ENCODE measurements at regions of chr10 and their contacts with region 1.

Region 1: DNA sequence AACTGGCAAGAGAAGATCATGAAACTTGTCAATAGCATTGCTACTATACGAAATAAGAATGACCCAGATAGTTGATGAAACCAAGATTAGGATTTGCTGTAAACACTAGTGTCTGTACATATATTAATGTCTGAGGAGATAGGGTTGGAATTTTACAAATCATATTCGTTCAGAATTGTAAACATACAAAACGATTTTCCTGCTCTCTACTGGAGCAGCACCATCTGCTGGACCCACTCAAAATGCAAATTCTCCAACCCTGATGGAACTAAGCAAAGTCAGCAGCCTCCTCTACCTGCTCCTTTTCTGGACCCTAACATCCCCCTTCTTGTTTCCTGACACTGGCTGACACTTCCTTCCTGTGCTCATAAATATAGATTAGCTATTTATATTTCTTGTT is 29.4 kb upstream of the SGMS1 start:
- DNase-seq: peak in 4 of 5 donors; percentile 29 to 37 (median 32)
- H3K4me3 ChIP-seq: no peak overlapping the region
- H3K4me3 Mint-ChIP-seq: peak overlapping the region in 1 of 8 donors; percentile 33
- H3K27ac ChIP-seq: no peak overlapping the region
- H3K27ac Mint-ChIP-seq: peak overlapping the region in 1 of 7 donors; percentile 32
- H3K4me1 ChIP-seq: peaks cover 15% of the 10 kb centered on the region
- H3K4me1 Mint-ChIP-seq: peaks cover 15 to 22% (median 16%) of the 10 kb centered on the region in 4 donors
- H3K27me3 ChIP-seq: no peaks in the 10 kb centered on the region
- H3K27me3 Mint-ChIP-seq: no peaks in the 10 kb centered on the region

Region 2: GRCh38 chr10:50367732-50368131 is 285.4 kb before region 1 on chr10:
- CTCF ChIA-PET with region 1: interaction called, 17 read pairs
- POLR2A ChIA-PET with region 1: no interaction called
- intact Hi-C with region 1: loop called (anchors 1 kb)
- DNase-seq: peak in 1 of 5 donors; percentile 3
- H3K4me3 ChIP-seq: no peak overlapping the region
- H3K4me3 Mint-ChIP-seq: no peak overlapping the region
- H3K27ac ChIP-seq: no peak overlapping the region
- H3K27ac Mint-ChIP-seq: no peak overlapping the region
- H3K4me1 ChIP-seq: peaks cover 4% of the 10 kb centered on the region
- H3K4me1 Mint-ChIP-seq: peaks cover 11 to 20% (median 13%) of the 10 kb centered on the region in 4 donors
- H3K27me3 ChIP-seq: no peaks in the 10 kb centered on the region
- H3K27me3 Mint-ChIP-seq: no peaks in the 10 kb centered on the region

Region 3: DNA sequence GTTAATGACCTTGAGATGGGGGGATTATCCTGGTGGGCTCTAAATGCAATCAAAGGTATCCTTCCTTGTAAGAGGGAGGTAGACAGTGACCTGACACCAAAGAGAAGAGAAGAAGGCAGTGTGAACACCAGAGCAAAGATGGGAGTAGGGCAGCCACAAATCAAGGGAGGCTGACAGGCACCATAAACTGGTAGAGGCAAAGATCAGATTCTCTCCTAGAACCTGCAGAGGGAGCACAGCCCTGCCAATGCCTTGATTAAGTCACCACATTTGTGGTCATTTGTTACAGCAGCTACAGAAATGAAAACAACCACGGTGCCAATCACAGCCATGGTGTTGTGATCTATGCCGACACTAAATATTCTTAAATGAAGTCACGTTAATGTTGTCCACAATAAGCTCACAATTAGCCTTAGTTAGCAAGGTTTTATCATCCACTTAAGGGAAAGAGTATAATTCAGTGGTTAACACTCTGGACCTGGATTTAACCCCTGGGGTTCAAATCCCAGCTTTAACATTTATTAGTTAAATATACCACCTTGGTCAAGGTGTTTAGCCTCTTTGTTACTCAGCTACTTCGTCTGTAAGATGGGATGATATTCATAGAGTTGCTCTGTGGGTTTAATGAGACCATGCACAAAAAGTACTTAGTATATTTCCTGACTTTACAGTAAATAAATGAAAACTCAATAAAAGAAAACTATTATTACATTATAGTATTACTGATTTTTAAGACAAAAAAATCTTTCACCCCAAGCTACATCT is 100.2 kb before region 1 on chr10:
- CTCF ChIA-PET with region 1: interaction called, 26 read pairs
- POLR2A ChIA-PET with region 1: no interaction called
- intact Hi-C with region 1: loop called (anchors 1 kb)
- DNase-seq: peak; percentile 21 to 49 (median 32)
- H3K4me3 ChIP-seq: no peak overlapping the region
- H3K4me3 Mint-ChIP-seq: no peak overlapping the region
- H3K27ac ChIP-seq: no peak overlapping the region
- H3K27ac Mint-ChIP-seq: peak overlapping the region in 3 of 7 donors; percentile 5 to 7 (median 6)
- H3K4me1 ChIP-seq: peaks cover 8% of the 10 kb centered on the region
- H3K4me1 Mint-ChIP-seq: peaks cover 22 to 55% (median 35%) of the 10 kb centered on the region in 4 donors
- H3K27me3 ChIP-seq: no peaks in the 10 kb centered on the region
- H3K27me3 Mint-ChIP-seq: no peaks in the 10 kb centered on the region

Region 4: DNA sequence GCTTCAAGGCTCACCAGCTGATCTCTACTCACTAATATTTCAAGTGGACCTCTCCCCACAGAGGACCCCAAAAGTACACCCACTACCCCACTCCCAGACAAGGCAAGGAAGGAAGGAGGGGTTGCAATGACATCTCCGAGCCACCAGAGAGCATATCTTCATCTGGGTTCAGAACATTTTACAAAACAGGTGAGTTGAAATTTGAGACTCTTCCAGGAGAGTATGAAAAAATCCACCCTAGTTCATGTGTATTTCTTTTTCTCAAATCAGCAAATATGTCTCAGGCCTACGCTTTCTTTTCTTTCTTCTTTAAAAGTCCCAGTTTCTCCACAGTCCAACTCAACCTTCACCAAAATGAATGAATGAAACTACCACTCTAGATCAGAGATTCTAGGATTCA is 91.3 kb before region 1 on chr10:
- CTCF ChIA-PET with region 1: interaction called, 11 read pairs
- POLR2A ChIA-PET with region 1: no interaction called
- intact Hi-C with region 1: loop called (anchors 1 kb)
- DNase-seq: peak in 3 of 5 donors; percentile 15 to 25 (median 16)
- H3K4me3 ChIP-seq: no peak overlapping the region
- H3K4me3 Mint-ChIP-seq: no peak overlapping the region
- H3K27ac ChIP-seq: no peak overlapping the region
- H3K27ac Mint-ChIP-seq: peak overlapping the region in 2 of 7 donors; percentile 20 to 72
- H3K4me1 ChIP-seq: no peaks in the 10 kb centered on the region
- H3K4me1 Mint-ChIP-seq: peaks cover 19 to 47% (median 21%) of the 10 kb centered on the region in 4 donors
- H3K27me3 ChIP-seq: no peaks in the 10 kb centered on the region
- H3K27me3 Mint-ChIP-seq: no peaks in the 10 kb centered on the region

Measured in CD4-positive, alpha-beta memory T cell (primary cell).